Activated naive CD8-positive, alpha-beta T cell treated with anti-CD3 and anti-CD28 coated beads, Interleukin-2, amount 10 ng/mL, durations not matched to agents 7 days and 5 days (primary cell): ENCODE measurements at regions of chr7 and their contacts with region 1.

Region 1: DNA sequence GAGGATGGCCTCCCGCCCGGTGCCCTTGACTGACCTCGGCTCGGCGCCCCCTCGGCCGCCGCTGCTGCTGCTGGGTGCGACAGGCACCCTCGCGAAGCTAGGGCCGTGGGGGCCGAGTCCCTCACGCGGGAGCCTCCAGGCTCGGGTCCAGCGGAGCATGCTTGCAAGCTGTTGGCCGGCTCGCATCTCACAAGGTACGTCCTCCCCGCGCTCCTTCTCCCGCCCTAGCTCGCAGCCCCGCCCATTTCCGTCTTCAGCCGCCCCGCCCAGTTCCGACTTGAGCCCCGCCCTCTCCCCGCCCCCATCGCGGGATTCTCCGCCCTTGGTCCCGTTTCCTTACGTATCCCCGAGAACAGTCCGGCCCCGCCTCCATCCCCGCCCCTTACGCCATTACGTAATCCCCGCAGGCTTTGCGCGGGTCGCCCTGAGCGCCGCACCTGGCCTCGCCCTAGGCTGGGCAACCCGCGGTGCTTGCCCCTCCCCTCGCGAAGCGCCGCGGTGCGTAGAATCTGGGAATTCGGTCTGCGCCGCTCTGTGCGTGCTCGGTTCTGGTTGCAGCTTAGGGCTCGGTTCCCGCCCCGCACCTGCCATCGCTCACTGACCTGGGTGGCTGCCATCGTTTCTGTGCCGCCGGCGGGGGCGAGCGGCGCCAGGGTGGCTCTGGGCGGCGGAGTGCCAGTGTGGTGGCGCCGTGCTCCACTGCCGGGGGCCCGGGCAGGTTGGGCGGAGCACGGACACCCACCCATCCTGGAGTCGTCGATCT is at the start of gene ABHD11:
- DNase-seq: peak; percentile 98
- ATAC-seq: peak; percentile 79
- H3K4me3 Mint-ChIP-seq: peak within 1 kb of the TSS; percentile 97
- H3K27ac Mint-ChIP-seq: peak within 1 kb of the TSS; percentile 98
- H3K4me1 Mint-ChIP-seq: peaks cover 16% of the 10 kb centered on the region
- H3K27me3 Mint-ChIP-seq: peaks cover 2% of the 10 kb centered on the region
- total RNA-seq, gene ABHD11: 23.4 to 24.7 TPM

Region 2: DNA sequence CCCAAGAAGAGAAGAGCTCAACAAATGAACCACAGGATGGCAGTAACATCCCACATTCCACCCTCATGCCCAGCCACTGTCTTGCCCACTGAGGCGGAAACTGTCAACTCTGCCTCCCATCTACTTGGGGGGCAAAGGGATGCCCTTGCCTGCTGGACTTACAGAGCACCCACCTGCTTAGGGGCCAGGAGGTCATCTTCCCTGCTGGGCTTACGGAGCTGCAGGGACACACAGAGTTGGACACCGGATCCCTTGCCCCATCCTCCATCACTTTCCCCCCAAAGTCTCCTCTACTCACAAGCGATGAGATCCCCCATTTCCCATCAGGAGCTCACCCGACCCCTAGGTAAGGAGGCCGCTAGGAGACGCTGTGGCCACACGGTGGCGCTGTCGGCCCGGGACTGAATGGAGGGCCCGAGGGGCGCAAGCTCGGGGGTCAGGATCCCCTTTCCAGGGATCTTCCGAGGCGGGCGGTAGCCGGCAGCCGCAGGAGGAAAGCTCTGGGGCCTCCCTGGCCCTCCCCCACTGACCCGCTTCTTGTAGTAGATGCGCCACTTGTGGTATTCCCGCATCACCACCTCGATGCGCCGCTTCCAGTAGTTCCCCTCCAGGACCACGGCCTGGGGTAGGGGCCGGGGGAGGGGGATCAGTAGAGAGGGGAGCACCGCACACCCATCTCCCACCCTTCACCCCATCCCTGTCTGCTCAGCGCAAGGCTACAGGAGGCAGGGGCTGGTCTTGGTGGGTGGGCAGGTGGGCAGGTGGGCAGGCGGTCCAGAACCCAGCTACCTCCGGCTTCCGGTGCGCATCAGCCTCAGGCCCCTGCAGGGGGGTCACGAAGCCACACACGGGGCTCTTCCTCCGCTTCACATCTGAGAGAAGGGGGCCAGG is 131.7 kb before region 1 on chr7:
- POLR2A ChIA-PET with region 1: interaction called, 14 read pairs
- DNase-seq: peak; percentile 81
- ATAC-seq: peak; percentile 75
- H3K4me3 Mint-ChIP-seq: no peak overlapping the region
- H3K27ac Mint-ChIP-seq: no peak overlapping the region
- H3K4me1 Mint-ChIP-seq: no peaks in the 10 kb centered on the region
- H3K27me3 Mint-ChIP-seq: peaks cover 22% of the 10 kb centered on the region

Region 3: DNA sequence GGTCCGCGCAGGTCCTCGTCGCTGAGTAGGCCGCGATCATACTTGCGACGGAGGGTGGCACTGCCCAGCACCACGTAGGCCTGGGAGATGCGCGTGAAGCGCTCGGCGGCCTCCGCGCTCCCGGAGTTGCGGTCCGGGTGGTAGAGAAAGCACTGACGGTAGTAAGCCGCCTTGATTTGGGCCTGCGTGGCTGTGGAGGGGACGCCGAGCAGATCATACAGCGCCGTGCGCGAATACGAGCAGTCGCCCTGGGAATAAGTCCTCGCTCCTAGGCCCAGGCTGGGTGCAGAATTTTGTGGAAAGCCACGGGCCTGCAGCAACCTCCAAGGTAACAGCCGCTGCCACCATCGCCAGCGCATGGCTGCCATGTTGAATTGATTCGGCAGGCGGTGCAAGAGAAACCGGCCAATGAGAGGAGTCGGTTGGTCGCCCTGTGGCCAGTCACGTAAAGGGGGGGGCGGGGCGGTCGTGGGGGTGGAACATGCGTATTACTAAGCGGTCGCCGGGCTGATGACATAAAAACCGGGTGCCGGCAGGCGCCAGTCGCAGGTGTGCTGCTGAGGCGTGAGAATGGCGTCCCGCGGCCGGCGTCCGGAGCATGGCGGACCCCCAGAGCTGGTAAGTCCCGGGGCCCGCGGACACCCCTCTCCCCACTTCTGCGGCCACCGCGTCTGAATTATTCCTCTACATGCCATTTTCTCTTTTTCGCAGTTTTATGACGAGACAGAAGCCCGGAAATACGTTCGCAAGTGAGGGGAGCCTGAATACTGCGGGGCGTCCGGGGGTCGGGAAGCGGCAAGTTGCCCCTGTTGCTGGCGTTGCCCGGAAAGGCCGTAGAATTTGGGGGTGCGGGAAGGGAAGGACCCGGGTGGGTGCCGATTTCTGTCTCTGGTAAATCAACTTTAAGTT is 55.5 kb before region 1 on chr7 and contains the starts of genes BUD23 and DNAJC30:
- POLR2A ChIA-PET with region 1: no interaction called
- DNase-seq: peak; percentile 89
- ATAC-seq: peak; percentile 94
- H3K4me3 Mint-ChIP-seq: peak within 1 kb of the TSS; percentile 99
- H3K27ac Mint-ChIP-seq: peak within 1 kb of the TSS; percentile 99
- H3K4me1 Mint-ChIP-seq: peaks cover 25% of the 10 kb centered on the region
- H3K27me3 Mint-ChIP-seq: no peaks in the 10 kb centered on the region
- total RNA-seq, gene BUD23: 58.7 to 64.1 TPM
- total RNA-seq, gene DNAJC30: 10.0 to 10.7 TPM

Region 4: GRCh38 chr7:73768642-73769535 is 30.1 kb after region 1 on chr7:
- POLR2A ChIA-PET with region 1: no interaction called
- DNase-seq: no peak
- ATAC-seq: no peak
- H3K4me3 Mint-ChIP-seq: no peak overlapping the region
- H3K27ac Mint-ChIP-seq: no peak overlapping the region
- H3K4me1 Mint-ChIP-seq: no peaks in the 10 kb centered on the region
- H3K27me3 Mint-ChIP-seq: peaks cover 43% of the 10 kb centered on the region